ENCODE measurements at regions of chr6 and their contacts with region 1.

Region 1: DNA sequence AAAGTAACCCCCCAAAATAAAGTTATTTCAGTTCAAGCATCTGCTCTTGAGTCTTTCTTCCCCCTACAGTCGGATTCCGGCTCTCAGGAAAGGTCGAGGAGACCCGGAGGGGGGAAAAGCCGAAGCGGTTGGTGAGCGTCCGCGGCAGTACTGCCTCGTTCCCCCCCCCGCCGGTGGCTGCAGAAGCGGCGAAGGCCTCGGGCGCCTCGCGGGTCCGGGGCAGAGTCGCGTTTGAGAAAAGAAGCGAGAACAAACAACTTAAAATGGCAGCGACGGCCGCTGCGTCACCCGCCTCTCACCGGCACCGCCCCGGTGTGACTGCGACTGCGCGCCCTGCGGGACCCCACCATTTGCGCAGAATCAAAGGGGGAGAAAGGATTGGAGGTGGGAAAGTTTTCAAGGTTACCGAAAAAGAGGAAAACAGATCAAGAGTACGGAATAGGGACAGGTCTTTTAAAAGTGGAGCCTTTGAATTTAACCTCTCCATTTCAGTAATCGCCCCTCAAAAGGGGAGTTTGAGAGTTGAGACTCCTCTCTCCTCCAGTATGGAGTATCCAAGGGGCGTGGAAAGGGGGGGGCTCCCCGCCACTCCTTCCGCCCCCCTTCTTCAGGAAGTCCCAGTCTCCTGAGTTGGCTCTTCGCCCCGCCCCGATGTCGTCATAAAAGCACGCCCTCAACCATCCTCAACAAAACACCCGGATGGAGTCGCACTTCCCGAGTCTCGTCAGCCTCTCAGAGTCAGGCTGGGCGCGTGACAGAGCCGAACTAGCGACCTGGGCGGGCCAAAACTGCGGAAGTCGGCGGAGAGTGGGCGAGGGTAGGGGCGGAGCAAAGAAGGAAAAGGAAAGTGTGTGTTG is 1.9 kb upstream of the C6orf62 start:
- DNase-seq: peak; percentile 99 to 100
- H3K4me3 ChIP-seq: peak overlapping the region; percentile 60 to 93
- H3K27ac ChIP-seq: peak overlapping the region; percentile 99
- H3K4me1 ChIP-seq: peaks cover 32% of the 10 kb centered on the region
- H3K27me3 ChIP-seq: no peaks in the 10 kb centered on the region
- CTCF ChIP-seq: peak in 1 of 3 experiments; percentile 17
- POLR2A ChIP-seq: peak; percentile 81 to 100

Region 2: DNA sequence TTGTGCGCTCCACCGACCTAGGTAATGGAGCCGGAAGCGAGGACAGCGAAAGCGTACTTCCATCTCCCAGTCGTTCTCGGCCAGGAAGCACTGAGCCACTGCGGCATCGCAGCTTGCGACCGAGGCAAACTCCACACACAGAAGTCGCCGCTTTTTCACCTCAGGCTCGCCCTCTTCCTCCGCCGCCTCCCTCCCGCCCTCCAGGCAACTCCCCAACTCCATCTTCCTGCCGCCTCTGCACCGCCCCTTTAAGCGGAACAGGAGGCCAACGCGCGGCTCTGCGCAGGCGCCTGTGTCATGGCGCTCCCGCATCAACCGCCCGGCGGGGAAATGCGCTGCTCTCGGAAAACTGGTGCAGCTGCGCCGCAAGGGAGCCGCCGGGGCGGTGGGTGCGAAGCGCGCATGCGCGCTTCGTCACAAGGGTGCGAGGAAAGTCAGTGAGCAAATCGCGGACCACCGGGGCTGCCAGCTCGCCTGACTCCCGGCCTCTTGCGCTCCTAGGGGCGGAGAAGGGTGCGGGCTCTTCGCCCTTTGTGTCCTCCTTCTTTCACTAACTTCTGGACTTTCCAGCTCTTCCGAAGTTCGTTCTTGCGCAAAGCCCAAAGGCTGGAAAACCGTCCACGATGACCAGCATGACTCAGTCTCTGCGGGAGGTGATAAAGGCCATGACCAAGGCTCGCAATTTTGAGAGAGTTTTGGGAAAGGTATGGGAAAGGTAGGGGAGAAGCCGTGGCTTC is 54.0 kb before region 1 on chr6 and contains the starts of genes ACOT13 and TDP2:
- intact Hi-C with region 1: loop called (anchors 2 kb)
- DNase-seq: peak in 1 of 2 donors; percentile 96
- H3K4me3 ChIP-seq: peak within 1 kb of the TSS; percentile 75 to 90
- H3K27ac ChIP-seq: peak within 1 kb of the TSS; percentile 91
- H3K4me1 ChIP-seq: peaks cover 39% of the 10 kb centered on the region
- H3K27me3 ChIP-seq: no peaks in the 10 kb centered on the region
- CTCF ChIP-seq: peak in 2 of 3 experiments; percentile 20 to 39
- POLR2A ChIP-seq: peak in 1 of 2 donors; percentile 75
- total RNA-seq, gene ACOT13: 4.4 TPM
- total RNA-seq, gene TDP2: 28.7 TPM

Measured in vagina (tissue), 2 donors.